Activated CD4-positive, alpha-beta T cell treated with anti-CD3 and anti-CD28 coated beads for 36 hours (primary cell): ENCODE measurements at regions of chr3 and their contacts with region 1.

Region 1: DNA sequence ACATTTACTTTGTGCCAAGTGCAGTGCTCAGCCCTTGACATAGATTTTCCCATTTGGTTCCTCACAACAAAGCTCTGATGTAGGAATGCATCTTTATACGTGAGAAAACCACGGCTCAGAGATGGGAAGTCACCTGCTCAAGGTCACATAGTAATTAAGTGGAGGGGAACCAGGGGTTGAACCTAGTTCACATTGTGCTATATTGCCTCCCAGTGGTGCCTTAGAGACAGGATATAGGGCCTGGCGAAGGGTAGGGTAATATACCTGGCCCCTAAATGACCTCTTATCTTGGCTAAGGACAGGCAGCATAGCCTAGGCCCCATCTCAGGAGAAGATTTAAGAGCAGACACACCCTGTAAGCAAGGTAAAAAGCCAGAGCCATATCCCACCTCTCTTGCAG is 71.5 kb downstream of the FOXP1 start:
- DNase-seq: peak; percentile 50
- ATAC-seq: peak; percentile 95
- H3K4me3 Mint-ChIP-seq: no peak overlapping the region
- H3K27ac Mint-ChIP-seq: no peak overlapping the region
- H3K4me1 Mint-ChIP-seq: peaks cover 16% of the 10 kb centered on the region
- H3K27me3 Mint-ChIP-seq: no peaks in the 10 kb centered on the region

Region 2: GRCh38 chr3:70539908-70540307 is 972.1 kb before region 1 on chr3:
- CTCF ChIA-PET with region 1: no interaction called
- POLR2A ChIA-PET with region 1: no interaction called
- intact Hi-C with region 1: loop called in 1 of 2 experiments (anchors 10 kb)
- DNase-seq: no peak
- ATAC-seq: no peak
- H3K4me3 Mint-ChIP-seq: no peak overlapping the region
- H3K27ac Mint-ChIP-seq: no peak overlapping the region
- H3K4me1 Mint-ChIP-seq: no peaks in the 10 kb centered on the region
- H3K27me3 Mint-ChIP-seq: peaks cover 5% of the 10 kb centered on the region

Region 3: DNA sequence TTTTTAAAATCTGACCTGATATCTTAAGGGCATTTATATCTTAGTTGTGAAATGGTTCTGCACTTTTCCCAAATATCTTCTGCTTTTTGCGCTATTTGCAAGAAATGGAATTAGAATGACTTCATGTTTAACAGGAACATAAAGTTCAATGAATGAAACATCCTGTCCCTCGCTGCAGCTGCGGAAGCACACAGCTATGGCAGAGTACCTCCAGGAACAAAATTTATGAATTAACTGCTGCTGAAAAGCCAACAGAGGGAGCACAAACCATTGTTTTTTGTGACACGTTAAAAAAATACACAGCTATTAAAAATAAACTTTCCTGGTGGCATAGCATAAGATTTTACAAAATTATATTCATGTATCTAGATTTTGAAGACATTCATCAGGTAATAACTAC is 795.2 kb before region 1 on chr3:
- CTCF ChIA-PET with region 1: no interaction called
- POLR2A ChIA-PET with region 1: no interaction called
- intact Hi-C with region 1: loop called in 1 of 2 experiments (anchors 10 kb)
- DNase-seq: peak; percentile 10
- ATAC-seq: no peak
- H3K4me3 Mint-ChIP-seq: no peak overlapping the region
- H3K27ac Mint-ChIP-seq: no peak overlapping the region
- H3K4me1 Mint-ChIP-seq: no peaks in the 10 kb centered on the region
- H3K27me3 Mint-ChIP-seq: peaks cover 3% of the 10 kb centered on the region

Region 4: GRCh38 chr3:70999730-71000129 is 512.3 kb before region 1 on chr3:
- CTCF ChIA-PET with region 1: no interaction called
- POLR2A ChIA-PET with region 1: no interaction called
- intact Hi-C with region 1: loop called in 1 of 2 experiments (anchors 5 kb)
- DNase-seq: no peak
- ATAC-seq: peak; percentile 53
- H3K4me3 Mint-ChIP-seq: no peak overlapping the region
- H3K27ac Mint-ChIP-seq: peak overlapping the region; percentile 24
- H3K4me1 Mint-ChIP-seq: peaks cover 51% of the 10 kb centered on the region
- H3K27me3 Mint-ChIP-seq: no peaks in the 10 kb centered on the region